Activated CD4-positive, alpha-beta memory T cell treated with anti-CD3 and anti-CD28 coated beads for 36 hours (primary cell): ENCODE measurements at regions of chr14 and their contacts with region 1.

Region 1: DNA sequence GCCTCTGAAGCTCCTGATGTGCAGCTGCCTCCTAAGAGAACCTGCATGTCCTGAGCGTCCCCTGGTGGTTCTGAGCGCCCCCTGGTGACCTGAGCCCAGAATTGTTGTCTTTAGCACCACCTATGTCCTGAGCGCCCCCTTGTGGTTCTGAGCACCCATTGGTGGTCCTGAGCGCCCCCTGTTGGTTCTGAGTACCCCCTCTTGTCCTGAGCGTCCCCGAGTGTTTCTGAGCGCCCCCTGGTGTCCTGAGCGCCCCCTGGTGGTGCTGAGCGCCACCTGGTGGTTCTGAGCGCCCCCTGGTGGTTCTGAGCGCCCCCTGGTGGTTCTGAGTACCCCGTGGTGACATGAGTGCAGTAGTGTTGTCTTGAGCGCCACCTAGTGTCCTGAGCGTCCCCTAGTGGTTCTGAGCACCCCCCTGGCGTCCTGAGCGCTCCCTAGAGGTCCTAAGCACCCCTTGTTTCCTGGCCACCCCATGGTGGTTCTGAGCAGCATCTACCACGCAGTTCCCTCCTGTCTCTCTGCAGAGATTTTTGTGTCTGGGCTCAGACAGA is 782.5 kb downstream of the TMEM121 start:
- DNase-seq: peak; percentile 97
- H3K4me3 Mint-ChIP-seq: no peak overlapping the region
- H3K27ac Mint-ChIP-seq: no peak overlapping the region
- H3K4me1 Mint-ChIP-seq: no peaks in the 10 kb centered on the region
- H3K27me3 Mint-ChIP-seq: peaks cover 10% of the 10 kb centered on the region

Region 2: DNA sequence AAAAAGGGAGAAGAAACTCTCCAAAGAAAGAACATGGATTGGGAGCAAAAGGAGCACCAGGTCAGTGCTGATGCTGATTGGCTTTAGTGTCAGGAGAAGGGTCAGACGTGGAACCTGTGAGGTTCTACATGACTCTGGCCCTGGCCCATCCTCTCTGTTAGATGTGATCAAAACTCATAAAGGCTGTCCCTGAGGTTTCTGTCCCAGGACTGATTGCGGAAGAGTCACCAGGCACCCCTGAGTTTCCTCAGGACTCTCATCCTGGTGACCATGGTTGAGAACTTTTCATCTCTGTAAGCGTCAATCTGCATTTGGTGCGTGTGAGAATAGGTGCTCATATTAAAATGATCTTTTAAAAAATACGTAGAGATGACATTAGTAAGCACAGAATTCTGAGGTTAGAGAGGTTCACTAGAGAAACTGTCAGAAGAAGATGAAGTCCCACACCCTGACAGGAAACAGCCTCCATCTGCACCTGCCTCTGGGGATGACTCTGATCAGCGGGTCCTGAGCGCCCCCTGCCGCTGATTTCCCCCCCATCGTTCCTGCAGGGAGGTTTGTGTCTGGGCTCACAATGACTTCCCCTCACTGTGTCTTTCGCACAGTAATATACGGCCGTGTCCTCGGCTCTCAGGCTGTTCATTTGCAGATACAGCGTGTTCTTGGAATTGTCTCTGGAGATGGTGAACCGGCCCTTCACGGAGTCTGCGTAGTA is 40.7 kb before region 1 on chr14:
- CTCF ChIA-PET with region 1: interaction called, 18 read pairs
- POLR2A ChIA-PET with region 1: no interaction called
- intact Hi-C with region 1: no loop called
- DNase-seq: peak; percentile 90
- H3K4me3 Mint-ChIP-seq: no peak overlapping the region
- H3K27ac Mint-ChIP-seq: no peak overlapping the region
- H3K4me1 Mint-ChIP-seq: peaks cover 8% of the 10 kb centered on the region
- H3K27me3 Mint-ChIP-seq: peaks cover 12% of the 10 kb centered on the region

Region 3: DNA sequence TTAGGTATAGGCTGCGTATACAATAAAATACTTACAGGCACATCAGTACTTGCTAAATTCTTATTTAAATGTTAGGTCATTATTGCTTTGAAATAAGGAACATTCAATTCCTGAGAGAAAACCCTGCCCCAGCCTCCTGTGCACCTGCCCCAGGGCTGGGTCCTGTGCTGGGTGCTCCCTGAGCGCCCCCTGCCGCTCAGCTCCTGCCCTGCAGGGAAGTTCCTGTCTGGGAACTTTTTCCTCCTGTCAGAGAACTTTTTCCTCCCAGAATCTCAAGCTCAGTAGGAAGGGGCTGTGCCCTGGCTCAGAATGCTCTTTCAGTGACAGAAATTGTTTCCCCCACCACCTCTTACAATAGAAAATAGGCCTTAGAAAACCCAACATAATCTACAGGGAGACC is 31.4 kb before region 1 on chr14:
- CTCF ChIA-PET with region 1: interaction called, 20 read pairs
- POLR2A ChIA-PET with region 1: no interaction called
- intact Hi-C with region 1: no loop called
- DNase-seq: peak; percentile 40
- H3K4me3 Mint-ChIP-seq: no peak overlapping the region
- H3K27ac Mint-ChIP-seq: no peak overlapping the region
- H3K4me1 Mint-ChIP-seq: peaks cover 9% of the 10 kb centered on the region
- H3K27me3 Mint-ChIP-seq: peaks cover 26% of the 10 kb centered on the region

Region 4: GRCh38 chr14:106286697-106287290 is 22.1 kb before region 1 on chr14:
- CTCF ChIA-PET with region 1: interaction called, 29 read pairs
- POLR2A ChIA-PET with region 1: no interaction called
- intact Hi-C with region 1: loop called (anchors 1 kb)
- DNase-seq: peak; percentile 43
- H3K4me3 Mint-ChIP-seq: no peak overlapping the region
- H3K27ac Mint-ChIP-seq: no peak overlapping the region
- H3K4me1 Mint-ChIP-seq: no peaks in the 10 kb centered on the region
- H3K27me3 Mint-ChIP-seq: peaks cover 18% of the 10 kb centered on the region

Region 5: DNA sequence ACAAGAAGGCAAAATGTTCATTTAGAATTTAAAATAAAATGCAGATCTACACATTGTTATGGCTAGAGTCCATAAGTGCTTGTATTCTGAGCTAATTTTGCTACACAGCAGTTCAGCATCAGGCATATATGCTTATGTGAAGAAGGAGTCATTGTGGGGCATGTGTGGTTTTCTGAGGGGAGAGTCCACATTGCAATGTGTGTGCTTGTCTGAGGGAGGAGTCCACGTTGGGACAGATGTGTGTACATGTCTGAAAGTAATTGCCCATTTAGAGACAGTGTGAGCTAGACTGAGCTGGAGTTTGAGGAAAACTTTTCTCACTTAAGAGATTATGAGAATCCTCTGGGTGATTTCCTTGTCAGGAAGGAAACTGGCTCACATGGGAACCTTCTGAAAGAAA is 14.6 kb before region 1 on chr14:
- CTCF ChIA-PET with region 1: interaction called, 29 read pairs
- POLR2A ChIA-PET with region 1: no interaction called
- intact Hi-C with region 1: no loop called
- DNase-seq: no peak
- H3K4me3 Mint-ChIP-seq: no peak overlapping the region
- H3K27ac Mint-ChIP-seq: no peak overlapping the region
- H3K4me1 Mint-ChIP-seq: no peaks in the 10 kb centered on the region
- H3K27me3 Mint-ChIP-seq: peaks cover 21% of the 10 kb centered on the region

Region 6: GRCh38 chr14:106372870-106373652 is 64.1 kb after region 1 on chr14:
- CTCF ChIA-PET with region 1: interaction called, 36 read pairs
- POLR2A ChIA-PET with region 1: no interaction called
- intact Hi-C with region 1: loop called (anchors 1 kb)
- DNase-seq: peak; percentile 90
- H3K4me3 Mint-ChIP-seq: peak overlapping the region; percentile 56
- H3K27ac Mint-ChIP-seq: peak overlapping the region; percentile 21
- H3K4me1 Mint-ChIP-seq: peaks cover 21% of the 10 kb centered on the region
- H3K27me3 Mint-ChIP-seq: peaks cover 12% of the 10 kb centered on the region

Region 7: GRCh38 chr14:106378191-106378590 is 69.3 kb after region 1 on chr14:
- CTCF ChIA-PET with region 1: interaction called, 36 read pairs
- POLR2A ChIA-PET with region 1: no interaction called
- intact Hi-C with region 1: loop called (anchors 1 kb)
- DNase-seq: peak; percentile 69
- H3K4me3 Mint-ChIP-seq: no peak overlapping the region
- H3K27ac Mint-ChIP-seq: no peak overlapping the region
- H3K4me1 Mint-ChIP-seq: peaks cover 21% of the 10 kb centered on the region
- H3K27me3 Mint-ChIP-seq: peaks cover 4% of the 10 kb centered on the region

Region 8: GRCh38 chr14:106436310-106436905 is 127.5 kb after region 1 on chr14:
- CTCF ChIA-PET with region 1: no interaction called
- POLR2A ChIA-PET with region 1: no interaction called
- intact Hi-C with region 1: no loop called
- DNase-seq: peak; percentile 65
- H3K4me3 Mint-ChIP-seq: no peak overlapping the region
- H3K27ac Mint-ChIP-seq: no peak overlapping the region
- H3K4me1 Mint-ChIP-seq: no peaks in the 10 kb centered on the region
- H3K27me3 Mint-ChIP-seq: peaks cover 30% of the 10 kb centered on the region